HEK293 (cell line): ENCODE measurements at regions of chr1 and their contacts with region 1.

Region 1: GRCh38 chr1:162847839-162848453 is 13.0 kb downstream of the CCDC190 start:
- H3K4me3 ChIP-seq: no peak overlapping the region
- H3K27ac ChIP-seq: no peak overlapping the region
- H3K4me1 ChIP-seq: peaks cover 6% of the 10 kb centered on the region
- CTCF ChIP-seq: peak; percentile 60

Region 2: DNA sequence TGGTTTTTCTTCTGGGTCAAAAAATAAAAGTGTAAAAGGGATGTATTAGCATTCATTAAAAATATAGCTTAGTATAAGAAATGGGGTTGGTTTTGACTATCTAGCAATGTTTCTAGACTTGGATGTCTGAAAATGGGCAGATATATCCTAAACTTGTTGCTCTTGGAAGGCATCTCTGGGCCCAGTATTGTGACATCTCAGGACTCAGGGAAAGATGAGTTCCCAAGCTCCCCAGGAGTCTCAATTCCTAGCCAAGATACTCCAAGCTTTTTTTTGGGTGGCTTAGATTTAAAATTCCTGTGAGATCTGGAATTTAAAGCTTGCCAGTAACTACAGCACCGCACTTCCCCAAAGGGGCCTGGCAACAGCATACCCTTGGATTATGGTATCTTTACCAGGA is 68.9 kb before region 1 on chr1:
- CTCF ChIA-PET with region 1: no interaction called
- POLR2A ChIA-PET with region 1: no interaction called
- H3K4me3 ChIP-seq: no peak overlapping the region
- H3K27ac ChIP-seq: no peak overlapping the region
- H3K4me1 ChIP-seq: no peaks in the 10 kb centered on the region
- CTCF ChIP-seq: no peak

Region 3: GRCh38 chr1:162823771-162824525 is 24.0 kb before region 1 on chr1:
- CTCF ChIA-PET with region 1: no interaction called
- POLR2A ChIA-PET with region 1: no interaction called
- H3K4me3 ChIP-seq: no peak overlapping the region
- H3K27ac ChIP-seq: no peak overlapping the region
- H3K4me1 ChIP-seq: peaks cover 4% of the 10 kb centered on the region; the same call in 1 of the 2 replicates
- CTCF ChIP-seq: no peak

Region 4: DNA sequence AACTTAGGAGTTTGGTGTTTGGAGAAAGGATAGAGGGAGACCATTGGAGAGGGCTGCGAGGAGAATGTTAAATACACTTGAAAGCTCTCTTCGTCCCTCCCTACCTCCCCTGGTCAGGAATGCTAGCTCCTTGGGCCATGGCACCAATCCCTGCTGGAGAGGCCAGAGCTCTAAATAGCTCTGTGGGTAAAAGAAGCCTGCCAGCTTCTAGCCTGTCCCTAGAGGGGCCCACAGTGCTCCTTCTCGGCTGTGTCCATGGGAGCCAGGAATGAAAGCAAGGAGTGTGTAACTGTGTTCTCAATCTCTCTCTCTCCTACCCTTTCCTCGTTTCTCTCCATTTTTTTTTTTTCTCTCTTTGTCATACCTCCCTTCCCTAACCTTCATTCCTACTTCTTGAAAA is 13.2 kb after region 1 on chr1 and contains the start of gene CCDC190:
- CTCF ChIA-PET with region 1: interaction called, 17 read pairs
- POLR2A ChIA-PET with region 1: no interaction called
- H3K4me3 ChIP-seq: no peak within 1 kb of the TSS
- H3K27ac ChIP-seq: no peak within 1 kb of the TSS
- H3K4me1 ChIP-seq: peaks cover 4% of the 10 kb centered on the region
- CTCF ChIP-seq: no peak

Region 5: GRCh38 chr1:163174524-163175437 is 326.8 kb after region 1 on chr1:
- CTCF ChIA-PET with region 1: interaction called, 14 read pairs
- POLR2A ChIA-PET with region 1: no interaction called
- H3K4me3 ChIP-seq: no peak overlapping the region
- H3K27ac ChIP-seq: no peak overlapping the region
- H3K4me1 ChIP-seq: peaks cover 7% of the 10 kb centered on the region; the same call in 1 of the 2 replicates
- CTCF ChIP-seq: peak; percentile 62